ENCODE measurements at regions of chrX and their contacts with region 1.

Region 1: GRCh38 chrX:46588263-46588662 is 14.7 kb downstream of the CHST7 start:
- DNase-seq: no peak
- ATAC-seq: peak; percentile 22; the same call in 1 of the 3 replicates
- H3K4me3 ChIP-seq: no peak overlapping the region
- H3K27ac ChIP-seq: peak overlapping the region; percentile 41
- H3K4me1 ChIP-seq: peaks cover 21% of the 10 kb centered on the region
- H3K27me3 ChIP-seq: no peaks in the 10 kb centered on the region
- CTCF ChIP-seq: no peak
- EP300 ChIP-seq: no peak
- POLR2A ChIP-seq: no peak
- RAD21 ChIP-seq: no peak

Region 2: DNA sequence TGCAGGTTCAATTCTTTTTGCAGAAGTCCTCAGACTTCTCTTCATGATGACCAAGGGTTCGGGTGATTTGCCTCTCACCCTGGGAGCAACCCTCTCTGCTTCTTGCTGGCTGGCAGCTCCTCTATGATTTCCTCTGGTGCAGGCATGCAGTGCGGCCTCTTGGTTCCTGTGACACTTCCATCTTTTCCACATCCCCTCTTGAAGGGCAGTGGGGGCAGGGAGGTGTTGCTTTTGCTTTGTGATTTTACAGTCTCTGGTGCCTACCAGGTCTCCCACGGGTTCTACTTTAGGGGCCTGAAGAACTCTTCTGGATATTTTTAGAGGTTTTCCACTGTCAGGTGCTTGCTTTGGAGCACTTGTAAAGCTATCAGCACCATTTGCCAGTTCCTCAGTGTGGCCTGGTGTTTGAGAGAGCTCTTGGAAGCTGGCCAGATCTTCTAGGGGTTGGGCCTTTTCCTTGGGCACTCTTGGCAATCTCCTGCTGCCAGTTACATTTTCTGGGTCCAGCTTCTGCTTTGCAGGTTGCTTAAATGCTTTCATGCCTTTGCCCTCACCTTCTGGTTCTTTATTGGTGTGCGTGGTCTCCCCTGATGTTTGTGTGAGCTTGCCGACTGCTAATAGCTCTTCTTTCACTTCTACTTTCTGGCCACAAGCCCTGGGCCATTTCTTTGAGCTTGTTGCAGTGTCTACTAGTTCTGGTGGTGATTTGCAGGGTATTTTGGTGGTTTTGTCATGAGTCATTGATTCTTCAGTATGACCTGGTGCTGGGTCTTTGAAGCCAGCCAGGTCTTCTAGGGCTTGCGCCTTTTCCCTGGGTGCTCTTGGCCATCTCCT is 26.2 kb before region 1 on chrX:
- CTCF ChIA-PET with region 1: no interaction called
- POLR2A ChIA-PET with region 1: no interaction called
- RAD21 ChIA-PET with region 1: interaction called, 6 read pairs
- SMC1A ChIA-PET with region 1: interaction called, 16 read pairs
- in situ Hi-C with region 1: no loop called
- intact Hi-C with region 1: no loop called
- DNase-seq: peak; percentile 95
- ATAC-seq: peak; percentile 99
- H3K4me3 ChIP-seq: peak overlapping the region; percentile 4; the same call in 1 of the 2 replicates
- H3K27ac ChIP-seq: peak overlapping the region; percentile 62
- H3K4me1 ChIP-seq: peaks cover 20% of the 10 kb centered on the region
- H3K27me3 ChIP-seq: no peaks in the 10 kb centered on the region
- CTCF ChIP-seq: no peak
- EP300 ChIP-seq: peak; percentile 70 to 94
- POLR2A ChIP-seq: no peak
- RAD21 ChIP-seq: 0 out of 2 replicates have a peak, but pooled peaks have one; percentile 6

Region 3: DNA sequence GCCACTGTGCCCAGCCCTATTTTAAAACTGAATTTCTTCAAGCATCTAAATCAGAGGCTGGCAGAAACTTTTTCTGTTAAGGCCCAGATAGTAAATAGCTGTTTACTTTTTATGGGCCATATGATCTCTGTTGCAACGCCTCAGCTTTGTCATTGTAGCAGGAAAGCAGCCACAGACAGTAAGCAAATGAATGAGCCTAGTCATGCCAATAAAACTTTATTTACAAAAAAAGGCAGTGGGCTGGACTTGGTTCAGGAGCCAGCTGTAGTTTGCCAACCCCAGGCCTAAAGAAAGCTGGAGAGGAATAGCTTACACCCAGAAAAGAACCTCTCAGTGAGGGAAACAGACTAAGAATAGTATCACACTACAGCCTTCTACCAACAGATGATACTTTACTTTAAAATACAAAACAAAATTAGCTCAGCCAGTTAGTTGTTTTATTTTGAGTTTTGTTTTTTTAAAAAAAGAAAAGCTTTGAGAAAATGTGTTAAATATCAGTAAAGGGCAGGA is 10.8 kb after region 1 on chrX:
- CTCF ChIA-PET with region 1: interaction called, 7 read pairs
- POLR2A ChIA-PET with region 1: interaction called, 4 read pairs
- RAD21 ChIA-PET with region 1: interaction called, 4 read pairs
- SMC1A ChIA-PET with region 1: interaction called, 15 read pairs
- in situ Hi-C with region 1: no loop called
- intact Hi-C with region 1: no loop called
- DNase-seq: no peak
- ATAC-seq: no peak
- H3K4me3 ChIP-seq: no peak overlapping the region
- H3K27ac ChIP-seq: no peak overlapping the region
- H3K4me1 ChIP-seq: peaks cover 7% of the 10 kb centered on the region
- H3K27me3 ChIP-seq: no peaks in the 10 kb centered on the region
- CTCF ChIP-seq: no peak
- EP300 ChIP-seq: no peak
- POLR2A ChIP-seq: no peak
- RAD21 ChIP-seq: no peak

Measured in GM12878 (cell line).